Activated T-helper 1 cell treated with anti-CD3 and anti-CD28 coated beads, Interleukin-12 subunit alpha, Interleukin-12 subunit beta, Interleukin-2, Interleukin-4 antibody, amounts not matched to agents 30 ng/mL and 10 ng/mL and 1 ng/mL, durations not matched to agents 14 hours and 24 hours and 36 hours (primary cell): ENCODE measurements at regions of chr3 and their contacts with region 1.

Region 1: GRCh38 chr3:98166396-98166795 is at the start of gene OR5H15:
- DNase-seq: no peak
- H3K4me3 Mint-ChIP-seq: no peak within 1 kb of the TSS
- H3K27ac Mint-ChIP-seq: no peak within 1 kb of the TSS
- H3K4me1 Mint-ChIP-seq: no peaks in the 10 kb centered on the region
- H3K27me3 Mint-ChIP-seq: no peaks in the 10 kb centered on the region
- total RNA-seq, gene OR5H15: not detected in 2 replicates

Region 2: DNA sequence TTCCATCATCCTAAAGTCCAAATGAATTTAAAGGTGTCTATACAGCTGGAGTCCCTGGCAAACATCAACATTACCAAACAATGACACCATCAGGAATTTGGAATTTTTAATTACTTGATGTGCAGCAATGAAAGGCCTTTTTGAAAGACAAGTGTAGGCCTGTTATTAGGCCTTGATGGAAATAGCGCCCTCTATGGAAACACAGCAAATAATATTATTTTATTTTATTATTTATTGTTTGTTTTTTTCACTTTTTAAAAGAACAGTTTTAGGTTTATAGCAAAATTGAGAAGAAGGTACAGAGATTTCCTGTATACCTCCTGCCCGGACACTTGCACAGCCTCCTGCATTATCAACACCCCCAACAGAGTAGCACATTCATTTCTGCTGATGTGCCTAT is 97.6 kb before region 1 on chr3:
- intact Hi-C with region 1: no loop called
- DNase-seq: no peak
- H3K4me3 Mint-ChIP-seq: no peak overlapping the region
- H3K27ac Mint-ChIP-seq: no peak overlapping the region
- H3K4me1 Mint-ChIP-seq: no peaks in the 10 kb centered on the region
- H3K27me3 Mint-ChIP-seq: peaks cover 14% of the 10 kb centered on the region

Region 3: DNA sequence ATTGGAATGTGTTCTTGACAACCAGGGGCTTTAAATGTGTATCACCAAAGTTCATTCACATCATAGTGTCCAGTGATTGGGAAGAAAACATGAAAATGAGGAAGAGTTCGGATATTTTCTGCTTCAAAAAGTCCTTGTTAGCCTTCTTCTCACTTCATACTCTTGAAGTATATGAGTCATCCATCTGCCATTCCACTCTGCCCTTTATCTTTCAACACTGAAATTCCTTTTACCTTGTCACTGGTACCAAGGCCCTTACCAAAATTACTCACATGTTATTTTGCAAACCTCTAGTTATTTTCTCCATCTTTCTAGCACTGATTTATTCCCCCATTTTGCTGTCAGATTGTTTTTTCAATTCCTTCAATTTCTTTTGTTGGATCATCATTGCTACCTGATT is 32.6 kb after region 1 on chr3:
- intact Hi-C with region 1: loop called (anchors 1 kb)
- DNase-seq: no peak
- H3K4me3 Mint-ChIP-seq: no peak overlapping the region
- H3K27ac Mint-ChIP-seq: no peak overlapping the region
- H3K4me1 Mint-ChIP-seq: no peaks in the 10 kb centered on the region
- H3K27me3 Mint-ChIP-seq: peaks cover 5% of the 10 kb centered on the region

Region 4: GRCh38 chr3:98343647-98344507 is 177.5 kb after region 1 on chr3:
- intact Hi-C with region 1: no loop called
- DNase-seq: no peak
- H3K4me3 Mint-ChIP-seq: no peak overlapping the region
- H3K27ac Mint-ChIP-seq: no peak overlapping the region
- H3K4me1 Mint-ChIP-seq: peaks cover 6% of the 10 kb centered on the region
- H3K27me3 Mint-ChIP-seq: peaks cover 53% of the 10 kb centered on the region